WTC11 (cell line): ENCODE measurements at regions of chr7 and their contacts with region 1.

Region 1: GRCh38 chr7:25259587-25260243 is 31.4 kb upstream of the NPVF start:
- DNase-seq: peak; percentile 69
- ATAC-seq: peak; percentile 95
- H3K4me3 Mint-ChIP-seq: no peak overlapping the region
- H3K27ac Mint-ChIP-seq: no peak overlapping the region
- H3K4me1 Mint-ChIP-seq: peaks cover 9% of the 10 kb centered on the region
- H3K27me3 Mint-ChIP-seq: no peaks in the 10 kb centered on the region; the same call in 1 of the 2 replicates
- CTCF ChIP-seq: peak; percentile 53

Region 2: DNA sequence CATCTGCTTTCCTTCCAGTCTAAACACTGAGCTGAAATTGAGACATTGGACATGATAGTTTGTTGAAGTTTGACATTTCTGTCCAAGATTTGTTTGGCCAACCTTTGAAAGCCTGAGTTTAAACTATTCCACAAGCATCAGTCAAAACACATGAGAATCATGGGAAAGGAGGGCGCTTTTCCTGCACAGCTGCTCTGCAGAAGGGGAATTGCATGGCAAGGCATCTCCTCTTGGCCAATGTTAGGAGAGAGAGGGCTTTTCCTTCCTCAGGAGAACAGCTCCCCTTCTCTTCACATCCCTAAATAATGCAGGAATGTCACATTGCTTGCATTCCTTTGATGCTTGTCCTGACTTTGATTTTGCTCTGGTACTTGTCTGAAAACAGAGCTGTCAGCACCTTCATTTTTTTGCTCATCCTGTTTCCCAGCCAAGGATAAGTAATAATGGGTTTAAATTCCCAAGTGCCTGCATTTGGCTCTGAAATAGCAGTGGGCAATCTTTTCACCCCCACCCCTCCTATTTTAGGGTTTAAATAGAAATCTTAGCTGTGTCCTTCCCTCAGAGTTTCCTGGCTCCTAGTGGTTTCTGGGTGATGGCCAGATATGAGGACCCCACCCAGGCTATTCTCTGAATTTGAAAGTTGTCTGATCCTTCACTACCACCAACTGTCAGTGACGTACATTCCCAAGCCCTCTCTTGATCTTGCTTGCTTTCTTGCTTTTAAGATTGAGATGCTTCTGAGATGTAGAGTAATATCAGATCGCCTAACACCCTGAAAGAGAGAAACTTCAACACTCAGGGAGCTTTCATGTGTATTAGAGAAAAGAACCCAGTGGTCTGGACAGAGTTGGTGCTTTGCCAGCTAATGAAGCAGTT is 43.8 kb after region 1 on chr7:
- CTCF ChIA-PET with region 1: interaction called, 10 read pairs
- POLR2A ChIA-PET with region 1: no interaction called
- DNase-seq: peak; percentile 29
- ATAC-seq: peak; percentile 98
- H3K4me3 Mint-ChIP-seq: no peak overlapping the region
- H3K27ac Mint-ChIP-seq: peak overlapping the region; percentile 96
- H3K4me1 Mint-ChIP-seq: peaks cover 35% of the 10 kb centered on the region
- H3K27me3 Mint-ChIP-seq: no peaks in the 10 kb centered on the region
- CTCF ChIP-seq: no peak

Region 3: DNA sequence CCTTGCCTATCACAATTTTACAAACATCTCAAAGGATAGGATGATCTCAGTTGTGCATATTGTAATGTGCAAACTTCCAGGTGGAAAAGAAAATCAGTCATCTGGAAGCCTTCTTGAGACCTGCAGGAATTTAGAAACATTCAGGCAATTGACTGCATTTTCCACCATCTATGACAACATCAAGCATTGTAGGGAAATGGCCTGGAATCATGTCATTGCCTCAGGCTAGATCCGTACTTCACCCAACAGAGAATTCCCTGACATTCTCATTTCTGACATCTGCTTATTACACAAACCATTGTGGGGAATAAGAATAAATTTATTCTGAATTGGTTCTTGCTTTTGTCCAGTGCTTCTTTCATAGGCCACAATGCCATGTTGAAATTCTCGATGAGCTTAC is 93.5 kb after region 1 on chr7:
- CTCF ChIA-PET with region 1: no interaction called
- POLR2A ChIA-PET with region 1: no interaction called
- DNase-seq: no peak
- ATAC-seq: no peak
- H3K4me3 Mint-ChIP-seq: no peak overlapping the region
- H3K27ac Mint-ChIP-seq: no peak overlapping the region
- H3K4me1 Mint-ChIP-seq: no peaks in the 10 kb centered on the region
- H3K27me3 Mint-ChIP-seq: no peaks in the 10 kb centered on the region
- CTCF ChIP-seq: no peak

Region 4: GRCh38 chr7:25389489-25390106 is 129.9 kb after region 1 on chr7:
- CTCF ChIA-PET with region 1: interaction called, 143 read pairs
- POLR2A ChIA-PET with region 1: no interaction called
- DNase-seq: no peak
- ATAC-seq: peak; percentile 62; the same call in 1 of the 2 replicates
- H3K4me3 Mint-ChIP-seq: no peak overlapping the region
- H3K27ac Mint-ChIP-seq: no peak overlapping the region
- H3K4me1 Mint-ChIP-seq: peaks cover 6% of the 10 kb centered on the region
- H3K27me3 Mint-ChIP-seq: no peaks in the 10 kb centered on the region
- CTCF ChIP-seq: no peak

Region 5: GRCh38 chr7:25395976-25396375 is 136.3 kb after region 1 on chr7:
- CTCF ChIA-PET with region 1: interaction called, 143 read pairs
- POLR2A ChIA-PET with region 1: no interaction called
- DNase-seq: peak; percentile 12
- ATAC-seq: peak; percentile 44; the same call in 1 of the 2 replicates
- H3K4me3 Mint-ChIP-seq: no peak overlapping the region
- H3K27ac Mint-ChIP-seq: no peak overlapping the region
- H3K4me1 Mint-ChIP-seq: no peaks in the 10 kb centered on the region
- H3K27me3 Mint-ChIP-seq: no peaks in the 10 kb centered on the region
- CTCF ChIP-seq: no peak